GM12878 (cell line): ENCODE measurements at regions of chr7 and their contacts with region 1.

Region 1: GRCh38 chr7:87231256-87231655 is 11.7 kb upstream of the TMEM243 start:
- DNase-seq: no peak
- ATAC-seq: no peak
- H3K4me3 ChIP-seq: no peak overlapping the region
- H3K27ac ChIP-seq: no peak overlapping the region
- H3K4me1 ChIP-seq: no peaks in the 10 kb centered on the region
- H3K27me3 ChIP-seq: no peaks in the 10 kb centered on the region
- CTCF ChIP-seq: no peak
- EP300 ChIP-seq: no peak
- POLR2A ChIP-seq: no peak
- RAD21 ChIP-seq: no peak

Region 2: DNA sequence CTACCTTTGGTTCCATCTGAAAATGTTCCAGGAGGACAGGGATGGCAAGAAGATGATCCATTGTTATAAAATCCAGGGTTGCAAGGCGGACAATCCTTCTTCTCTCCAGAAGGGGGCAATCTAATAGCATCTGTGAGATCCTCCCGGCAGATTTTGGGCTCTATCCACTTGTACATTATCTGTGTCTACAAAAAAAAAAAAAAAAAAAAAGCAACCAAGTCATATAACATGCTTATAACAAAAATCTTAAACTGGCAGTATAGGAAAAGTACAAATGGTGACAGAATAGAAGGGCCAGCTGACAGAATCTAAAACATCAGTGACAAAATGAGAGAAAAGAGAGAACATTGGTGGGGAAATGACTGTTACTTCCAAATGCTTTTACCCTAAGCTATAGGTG is 304.5 kb before region 1 on chr7:
- CTCF ChIA-PET with region 1: interaction called, 10 read pairs
- POLR2A ChIA-PET with region 1: no interaction called
- RAD21 ChIA-PET with region 1: interaction called, 3 read pairs
- SMC1A ChIA-PET with region 1: interaction called, 5 read pairs
- in situ Hi-C with region 1: loop called (anchors 5 kb)
- intact Hi-C with region 1: no loop called
- DNase-seq: no peak
- ATAC-seq: peak; percentile 80
- H3K4me3 ChIP-seq: no peak overlapping the region
- H3K27ac ChIP-seq: no peak overlapping the region
- H3K4me1 ChIP-seq: peaks cover 10% of the 10 kb centered on the region
- H3K27me3 ChIP-seq: no peaks in the 10 kb centered on the region
- CTCF ChIP-seq: peak; percentile 67 to 72 (median 70)
- EP300 ChIP-seq: no peak
- POLR2A ChIP-seq: no peak
- RAD21 ChIP-seq: peak; percentile 84

Region 3: DNA sequence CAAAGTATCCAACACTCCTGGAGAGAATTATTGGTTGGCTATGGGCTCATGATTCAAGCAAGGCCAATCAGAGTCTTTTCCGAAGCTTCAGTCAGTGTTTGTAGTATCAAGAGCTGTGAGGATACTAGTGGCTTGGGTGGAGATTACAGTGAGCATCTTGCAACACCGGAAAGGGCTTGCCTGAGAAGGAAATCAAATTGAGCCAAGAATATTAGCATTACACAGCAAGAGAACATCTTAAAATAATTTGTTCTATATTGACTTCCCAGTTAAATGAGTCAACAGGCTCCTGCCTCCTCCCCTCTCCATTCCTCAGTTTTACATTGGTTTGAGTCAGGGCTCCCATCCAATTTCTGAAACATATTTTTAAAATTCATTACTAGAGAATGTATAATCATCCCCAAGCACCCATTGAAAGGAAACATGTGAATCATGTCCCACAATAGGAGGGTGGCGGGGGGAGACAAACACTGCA is 299.2 kb before region 1 on chr7:
- CTCF ChIA-PET with region 1: interaction called, 10 read pairs
- POLR2A ChIA-PET with region 1: no interaction called
- RAD21 ChIA-PET with region 1: interaction called, 5 read pairs
- SMC1A ChIA-PET with region 1: interaction called, 5 read pairs
- in situ Hi-C with region 1: loop called (anchors 5 kb)
- intact Hi-C with region 1: no loop called
- DNase-seq: no peak
- ATAC-seq: peak; percentile 34; the same call in 1 of the 3 replicates
- H3K4me3 ChIP-seq: no peak overlapping the region
- H3K27ac ChIP-seq: no peak overlapping the region
- H3K4me1 ChIP-seq: peaks cover 10% of the 10 kb centered on the region
- H3K27me3 ChIP-seq: no peaks in the 10 kb centered on the region
- CTCF ChIP-seq: no peak
- EP300 ChIP-seq: no peak
- POLR2A ChIP-seq: no peak
- RAD21 ChIP-seq: no peak

Region 4: DNA sequence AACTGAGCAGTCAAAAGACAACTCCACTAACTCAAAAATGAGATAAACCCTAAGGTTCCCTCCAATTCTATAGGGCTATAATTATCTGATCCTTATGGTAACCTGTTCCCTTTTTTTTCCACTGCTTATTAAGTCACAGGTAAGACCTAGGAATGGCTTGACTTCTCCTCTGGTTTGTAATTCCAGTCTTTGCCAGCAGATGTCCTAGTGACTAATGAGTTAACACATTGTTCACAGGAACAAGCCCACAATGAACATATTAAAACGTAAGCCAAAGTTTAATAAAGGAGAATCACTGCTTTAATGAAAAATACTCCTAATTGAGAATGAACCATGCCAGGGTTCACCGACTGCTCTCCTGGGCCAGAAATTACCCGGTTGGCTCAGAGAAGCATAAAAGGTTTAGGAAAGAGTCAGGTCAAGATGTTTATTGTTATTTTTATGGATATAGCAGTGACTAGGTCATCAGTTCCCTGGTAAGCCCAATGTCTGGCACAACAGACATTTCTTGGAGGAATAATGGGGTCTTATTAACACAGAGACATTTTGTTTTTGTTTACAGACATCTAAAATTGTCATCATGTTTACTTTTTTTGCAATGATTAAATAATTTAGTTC is 291.9 kb before region 1 on chr7:
- CTCF ChIA-PET with region 1: interaction called, 10 read pairs
- POLR2A ChIA-PET with region 1: no interaction called
- RAD21 ChIA-PET with region 1: interaction called, 5 read pairs
- SMC1A ChIA-PET with region 1: interaction called, 5 read pairs
- in situ Hi-C with region 1: loop called (anchors 5 kb)
- intact Hi-C with region 1: loop called (anchors 2 kb)
- DNase-seq: peak; percentile 40
- ATAC-seq: peak; percentile 88
- H3K4me3 ChIP-seq: no peak overlapping the region
- H3K27ac ChIP-seq: no peak overlapping the region
- H3K4me1 ChIP-seq: no peaks in the 10 kb centered on the region
- H3K27me3 ChIP-seq: no peaks in the 10 kb centered on the region
- CTCF ChIP-seq: peak; percentile 57 to 71 (median 69); a peak in 5 of 6 replicates
- EP300 ChIP-seq: no peak
- POLR2A ChIP-seq: no peak
- RAD21 ChIP-seq: peak; percentile 88

Region 5: DNA sequence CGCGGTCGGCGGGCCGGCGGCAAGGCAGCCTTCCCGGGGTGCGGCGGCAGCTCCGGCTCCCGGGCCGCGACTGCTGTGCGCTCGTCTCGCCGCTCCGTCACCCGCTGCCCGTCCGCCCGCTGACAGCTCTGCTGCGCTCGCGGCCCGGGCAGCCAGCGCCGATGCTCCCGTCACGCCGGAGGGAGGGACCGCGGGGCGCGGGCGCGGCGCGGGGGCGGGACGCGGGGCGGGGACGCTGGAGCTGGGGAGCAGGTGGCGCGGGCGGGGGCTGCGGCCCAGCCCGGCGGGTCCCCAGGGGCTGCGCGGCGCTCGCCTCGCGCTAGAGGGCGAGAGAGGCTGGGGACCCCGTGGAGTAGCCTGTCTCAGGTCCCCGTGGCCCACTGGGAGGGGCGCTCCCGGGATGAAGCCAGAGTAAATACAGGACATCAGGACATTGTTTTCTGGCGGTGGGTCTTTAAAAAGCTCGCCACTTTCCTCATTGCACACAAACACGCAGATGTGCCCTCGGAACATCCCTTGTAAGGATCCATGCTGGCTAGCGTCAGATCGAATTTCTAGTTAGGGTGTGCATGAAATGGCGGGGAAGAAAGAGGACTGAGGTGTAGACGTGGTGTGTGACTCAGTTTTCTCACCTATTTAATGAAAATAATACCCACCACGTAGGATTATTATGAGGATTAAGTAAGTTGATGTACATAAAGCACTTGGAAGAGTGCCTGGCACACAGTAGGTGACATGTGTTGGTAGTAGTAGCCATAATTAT is 171.6 kb before region 1 on chr7 and contains the start of gene ELAPOR2:
- CTCF ChIA-PET with region 1: interaction called, 3 read pairs
- POLR2A ChIA-PET with region 1: no interaction called
- RAD21 ChIA-PET with region 1: no interaction called
- SMC1A ChIA-PET with region 1: interaction called, 5 read pairs
- in situ Hi-C with region 1: no loop called
- intact Hi-C with region 1: loop called (anchors 2 kb)
- DNase-seq: peak; percentile 8
- ATAC-seq: peak; percentile 97
- H3K4me3 ChIP-seq: peak within 1 kb of the TSS; percentile 78
- H3K27ac ChIP-seq: peak within 1 kb of the TSS; percentile 27; the same call in 1 of the 2 replicates
- H3K4me1 ChIP-seq: no peaks in the 10 kb centered on the region
- H3K27me3 ChIP-seq: no peaks in the 10 kb centered on the region; a peak in 1 of 4 replicates
- CTCF ChIP-seq: peak; percentile 49 to 61 (median 55)
- EP300 ChIP-seq: no peak
- POLR2A ChIP-seq: peak; percentile 78
- RAD21 ChIP-seq: peak; percentile 64
- polyA plus RNA-seq, gene ELAPOR2: 1.3 to 2.3 TPM

Region 6: GRCh38 chr7:87100326-87100725 is 130.9 kb before region 1 on chr7:
- CTCF ChIA-PET with region 1: no interaction called
- POLR2A ChIA-PET with region 1: no interaction called
- RAD21 ChIA-PET with region 1: no interaction called
- SMC1A ChIA-PET with region 1: no interaction called
- in situ Hi-C with region 1: no loop called
- intact Hi-C with region 1: no loop called
- DNase-seq: no peak
- ATAC-seq: no peak
- H3K4me3 ChIP-seq: no peak overlapping the region
- H3K27ac ChIP-seq: no peak overlapping the region
- H3K4me1 ChIP-seq: no peaks in the 10 kb centered on the region
- H3K27me3 ChIP-seq: no peaks in the 10 kb centered on the region
- CTCF ChIP-seq: no peak
- EP300 ChIP-seq: no peak
- POLR2A ChIP-seq: no peak
- RAD21 ChIP-seq: no peak